Calu3 (cell line): ENCODE measurements at regions of chr11 and their contacts with region 1.

Region 1: DNA sequence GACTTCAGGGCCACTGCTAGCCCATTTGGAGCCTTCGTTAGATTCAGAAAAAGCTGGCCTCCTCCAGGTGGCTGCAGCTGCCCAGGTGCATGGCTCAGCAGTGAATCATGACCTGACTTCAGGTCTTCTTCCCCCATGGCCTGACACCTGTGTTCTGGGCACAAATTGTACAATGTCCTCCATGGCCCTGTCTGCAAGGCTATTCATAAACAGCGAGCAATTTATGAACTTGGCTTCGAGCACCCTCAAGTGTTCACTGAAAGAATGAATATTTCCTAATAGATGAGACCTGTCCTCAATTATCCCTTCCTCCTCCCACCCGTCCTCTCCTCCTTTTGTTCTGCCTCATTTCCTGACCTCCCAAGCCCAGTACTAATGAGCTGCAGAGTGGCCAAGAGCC is 12.2 kb upstream of the VPS37C start:
- DNase-seq: peak; percentile 36
- H3K4me3 Mint-ChIP-seq: no peak overlapping the region
- H3K27ac Mint-ChIP-seq: no peak overlapping the region
- H3K4me1 Mint-ChIP-seq: peaks cover 16% of the 10 kb centered on the region
- H3K27me3 Mint-ChIP-seq: peaks cover 55% of the 10 kb centered on the region
- CTCF ChIP-seq: no peak

Region 2: GRCh38 chr11:60970369-60970774 is 203.1 kb before region 1 on chr11:
- CTCF ChIA-PET with region 1: interaction called, 5 read pairs
- intact Hi-C with region 1: loop called (anchors 1 kb)
- DNase-seq: peak; percentile 74
- H3K4me3 Mint-ChIP-seq: no peak overlapping the region
- H3K27ac Mint-ChIP-seq: no peak overlapping the region
- H3K4me1 Mint-ChIP-seq: no peaks in the 10 kb centered on the region
- H3K27me3 Mint-ChIP-seq: peaks cover 55% of the 10 kb centered on the region
- CTCF ChIP-seq: peak; percentile 84

Region 3: GRCh38 chr11:61695917-61696316 is 522.5 kb after region 1 on chr11:
- CTCF ChIA-PET with region 1: no interaction called
- intact Hi-C with region 1: no loop called
- DNase-seq: peak; percentile 92
- H3K4me3 Mint-ChIP-seq: peak overlapping the region; percentile 49
- H3K27ac Mint-ChIP-seq: peak overlapping the region; percentile 87
- H3K4me1 Mint-ChIP-seq: peaks cover 42% of the 10 kb centered on the region
- H3K27me3 Mint-ChIP-seq: no peaks in the 10 kb centered on the region
- CTCF ChIP-seq: no peak